ENCODE measurements at regions of chr1 and their contacts with region 1.

Region 1: GRCh38 chr1:11262171-11263049 is at the start of gene MTOR:
- DNase-seq: peak; percentile 83 to 99 (median 98)
- ATAC-seq: peak; percentile 98
- H3K4me3 Mint-ChIP-seq: peak within 1 kb of the TSS; percentile 87 to 96 (median 91)
- H3K27ac Mint-ChIP-seq: peak within 1 kb of the TSS; percentile 73 to 96 (median 92)
- H3K4me1 Mint-ChIP-seq: peaks cover 4 to 20% (median 17%) of the 10 kb centered on the region in 4 donors
- H3K27me3 Mint-ChIP-seq: peaks cover 0 to 2% (median 0%) of the 10 kb centered on the region in 5 donors
- polyA plus RNA-seq, gene MTOR: 3.5 to 7.2 (median 4.7) TPM

Region 2: GRCh38 chr1:11272832-11273594 is 10.6 kb after region 1 on chr1 and contains the start of gene UBIAD1:
- POLR2A ChIA-PET with region 1: interaction called, 57 read pairs
- DNase-seq: peak; percentile 58 to 91 (median 80)
- ATAC-seq: peak; percentile 85 to 90
- H3K4me3 Mint-ChIP-seq: peak within 1 kb of the TSS; percentile 89 to 98 (median 94)
- H3K27ac Mint-ChIP-seq: peak within 1 kb of the TSS; percentile 88 to 98 (median 92)
- H3K4me1 Mint-ChIP-seq: peaks cover 17 to 38% (median 35%) of the 10 kb centered on the region in 4 donors
- H3K27me3 Mint-ChIP-seq: no peaks in the 10 kb centered on the region
- polyA plus RNA-seq, gene UBIAD1: 29.2 to 50.3 (median 45.2) TPM

Region 3: DNA sequence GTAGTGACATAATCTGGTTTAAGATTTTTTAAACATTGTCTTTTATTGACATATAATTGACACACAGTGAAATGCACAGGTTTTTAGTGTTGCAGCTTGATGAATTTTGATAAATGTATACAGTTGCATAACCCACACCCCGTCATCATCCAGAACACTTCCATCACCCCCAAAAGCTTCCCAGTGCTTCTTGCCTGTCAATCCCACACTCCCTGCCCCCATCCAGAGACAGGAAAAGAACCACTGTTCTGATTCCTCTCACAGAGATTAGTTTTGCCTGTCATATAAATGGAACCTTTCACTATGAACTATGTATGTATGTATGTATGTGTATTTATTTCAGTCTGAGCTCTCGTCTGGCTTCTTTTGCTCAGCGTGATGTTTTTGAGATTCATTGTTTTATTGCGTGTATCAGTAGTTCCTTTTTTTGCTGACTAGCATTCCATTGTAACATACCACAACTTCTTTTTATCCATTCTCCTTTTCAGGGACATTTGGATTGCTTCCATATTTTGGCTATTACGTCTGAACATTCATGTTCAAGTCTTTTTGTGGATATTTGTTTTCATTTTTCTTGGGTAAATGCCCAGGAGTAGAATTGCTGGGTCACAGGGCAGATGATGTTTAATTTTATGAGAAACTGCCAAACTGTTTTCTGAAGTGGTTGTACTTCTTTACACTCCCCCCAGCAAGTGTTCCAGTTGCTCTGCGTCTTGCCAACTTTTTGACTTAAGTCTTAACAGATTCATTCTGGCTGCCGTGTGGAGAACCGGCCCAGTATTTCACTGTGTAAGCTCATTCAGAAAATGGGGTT is 19.3 kb after region 1 on chr1:
- POLR2A ChIA-PET with region 1: interaction called, 57 read pairs
- DNase-seq: no peak
- ATAC-seq: no peak
- H3K4me3 Mint-ChIP-seq: peak overlapping the region in 9 of 10 donors; percentile 57 to 77 (median 69)
- H3K27ac Mint-ChIP-seq: peak overlapping the region; percentile 84 to 96 (median 92)
- H3K4me1 Mint-ChIP-seq: peaks cover 57 to 94% (median 85%) of the 10 kb centered on the region in 4 donors
- H3K27me3 Mint-ChIP-seq: no peaks in the 10 kb centered on the region

Measured in naive thymus-derived CD8-positive, alpha-beta T cell (primary cell).